Heart right ventricle (tissue), 16 donors: ENCODE measurements at regions of chr1 and their contacts with region 1.

Region 1: GRCh38 chr1:23916209-23917131 is 3.3 kb upstream of the CNR2 start:
- DNase-seq: peak; percentile 51 to 56
- ATAC-seq: peak; percentile 73 to 86 (median 80)
- H3K4me3 ChIP-seq: no peak overlapping the region
- H3K27ac ChIP-seq: peak overlapping the region in 3 of 10 donors; percentile 6 to 27 (median 16)
- H3K4me1 ChIP-seq: peaks cover 0 to 33% (median 8%) of the 10 kb centered on the region in 9 donors
- H3K27me3 ChIP-seq: no peaks in the 10 kb centered on the region
- CTCF ChIP-seq: peak; percentile 34 to 76 (median 64)

Region 2: GRCh38 chr1:23772049-23772853 is 144.2 kb before region 1 on chr1:
- intact Hi-C with region 1: loop called in 4 of 10 experiments (anchors 1 to 5 kb)
- DNase-seq: peak; percentile 86
- ATAC-seq: peak; percentile 65 to 90 (median 82)
- H3K4me3 ChIP-seq: no peak overlapping the region
- H3K27ac ChIP-seq: no peak overlapping the region
- H3K4me1 ChIP-seq: peaks cover 0 to 54% (median 13%) of the 10 kb centered on the region in 9 donors
- H3K27me3 ChIP-seq: no peaks in the 10 kb centered on the region
- CTCF ChIP-seq: peak; percentile 85 to 96 (median 92)

Region 3: DNA sequence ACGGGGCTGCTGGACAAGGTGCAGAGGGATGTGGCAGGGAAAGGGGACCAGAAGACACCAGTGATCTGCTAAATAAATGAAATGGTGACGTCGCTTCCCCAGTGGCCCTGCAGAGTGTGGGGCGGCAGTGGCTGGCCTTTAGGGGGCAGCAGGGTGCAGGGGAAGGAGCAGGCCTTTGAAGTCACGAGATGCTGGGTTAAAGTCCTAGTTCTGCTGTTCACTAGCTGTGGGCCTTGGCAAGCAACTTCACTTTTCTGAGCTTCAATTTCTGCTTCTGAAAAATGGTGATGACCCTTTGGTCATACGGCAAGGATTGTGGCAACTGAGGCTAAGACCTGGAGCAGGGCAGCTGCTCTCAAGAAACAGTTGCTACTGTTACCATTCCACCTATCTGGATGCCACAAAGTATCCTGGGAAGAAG is 106.7 kb before region 1 on chr1:
- intact Hi-C with region 1: loop called in 4 of 10 experiments (anchors 5 to 10 kb)
- DNase-seq: peak; percentile 62 to 75
- ATAC-seq: peak; percentile 70 to 91 (median 86)
- H3K4me3 ChIP-seq: no peak overlapping the region
- H3K27ac ChIP-seq: peak overlapping the region in 4 of 10 donors; percentile 6 to 72 (median 28)
- H3K4me1 ChIP-seq: peaks cover 0 to 27% (median 0%) of the 10 kb centered on the region in 9 donors
- H3K27me3 ChIP-seq: no peaks in the 10 kb centered on the region
- CTCF ChIP-seq: peak; percentile 49 to 92 (median 73)